Lower leg skin (tissue), 4 donors: ENCODE measurements at regions of chr14 and their contacts with region 1.

Region 1: GRCh38 chr14:56686416-56686815 is 106.8 kb downstream of the TMEM260 start:
- DNase-seq: no peak
- H3K4me3 ChIP-seq: no peak overlapping the region
- CTCF ChIP-seq: no peak
- POLR2A ChIP-seq: no peak

Region 2: GRCh38 chr14:56487090-56487667 is 199.2 kb before region 1 on chr14:
- intact Hi-C with region 1: no loop called
- DNase-seq: no peak
- H3K4me3 ChIP-seq: no peak overlapping the region
- CTCF ChIP-seq: no peak
- POLR2A ChIP-seq: no peak

Region 3: GRCh38 chr14:56647493-56647892 is 38.9 kb before region 1 on chr14:
- intact Hi-C with region 1: no loop called
- DNase-seq: no peak
- H3K4me3 ChIP-seq: no peak overlapping the region
- CTCF ChIP-seq: no peak
- POLR2A ChIP-seq: no peak

Region 4: DNA sequence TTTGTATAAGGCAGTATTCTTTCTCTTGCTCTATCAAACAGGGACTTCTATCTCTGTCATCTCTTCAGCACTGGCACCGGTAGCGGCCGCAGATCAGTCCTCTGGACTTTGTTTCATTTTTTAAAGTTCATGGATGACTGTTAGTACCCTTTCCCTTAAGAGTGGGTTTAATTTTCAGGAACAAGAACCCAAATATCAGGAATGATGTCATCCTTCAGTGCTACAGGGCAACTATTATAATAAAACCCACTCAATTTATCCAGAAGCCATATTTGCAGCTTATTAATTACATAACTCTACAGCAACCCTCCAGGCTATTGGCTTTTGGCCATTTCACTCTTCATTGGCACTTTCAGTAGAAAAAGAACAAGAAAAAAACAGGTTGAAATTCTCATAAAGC is 77.9 kb after region 1 on chr14:
- intact Hi-C with region 1: loop called (anchors 2 kb)
- DNase-seq: no peak
- H3K4me3 ChIP-seq: no peak overlapping the region
- CTCF ChIP-seq: no peak
- POLR2A ChIP-seq: no peak